ENCODE measurements at regions of chr6 and their contacts with region 1.

Region 1: DNA sequence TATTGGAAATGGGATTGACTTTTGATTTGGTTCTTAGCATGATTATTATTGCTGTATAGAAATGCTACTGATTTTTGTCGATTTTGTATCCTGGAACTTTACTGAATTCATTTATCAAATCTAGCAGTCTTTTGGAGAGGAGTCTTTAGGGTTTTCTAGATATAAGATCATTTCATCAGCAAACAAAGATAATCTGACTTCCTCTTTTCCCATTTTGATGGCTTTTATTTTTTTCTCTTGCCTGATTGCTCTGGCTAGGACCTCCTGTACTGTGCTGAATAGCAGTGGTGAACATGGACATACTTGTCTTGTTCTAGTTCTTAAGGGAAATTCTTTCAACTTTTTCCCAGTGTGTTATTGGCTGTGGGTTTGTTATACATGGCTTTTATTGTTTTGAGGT is 64.6 kb downstream of the ZC2HC1B start:
- DNase-seq: no peak
- H3K4me3 ChIP-seq: no peak overlapping the region
- H3K27ac ChIP-seq: no peak overlapping the region
- H3K4me1 ChIP-seq: no peaks in the 10 kb centered on the region
- CTCF ChIP-seq: no peak

Region 2: GRCh38 chr6:143912671-143913070 is 16.2 kb before region 1 on chr6:
- CTCF ChIA-PET with region 1: no interaction called
- POLR2A ChIA-PET with region 1: no interaction called
- intact Hi-C with region 1: no loop called
- DNase-seq: no peak
- H3K4me3 ChIP-seq: no peak overlapping the region
- H3K27ac ChIP-seq: no peak overlapping the region
- H3K4me1 ChIP-seq: no peaks in the 10 kb centered on the region
- CTCF ChIP-seq: no peak

Region 3: DNA sequence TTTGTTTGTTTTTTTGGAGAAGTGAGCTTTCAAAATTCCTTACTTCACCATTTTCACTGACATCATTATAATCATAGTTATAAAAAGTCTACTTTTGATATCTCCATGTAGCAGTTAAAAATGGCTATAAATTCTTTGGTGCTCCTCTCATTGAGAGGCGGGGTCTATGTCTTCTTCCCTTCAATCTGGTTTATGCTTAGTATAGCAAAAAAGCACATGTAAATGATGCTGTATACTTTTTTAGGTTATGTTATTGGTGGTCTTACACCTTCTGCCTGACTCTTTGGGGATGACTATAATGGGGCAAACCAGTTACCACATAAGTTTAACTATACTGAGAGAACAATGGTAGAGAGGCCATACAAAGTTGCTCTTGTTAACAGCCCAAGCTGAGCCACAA is 1516.8 kb after region 1 on chr6:
- CTCF ChIA-PET with region 1: no interaction called
- POLR2A ChIA-PET with region 1: interaction called, 10 read pairs
- intact Hi-C with region 1: no loop called
- DNase-seq: no peak
- H3K4me3 ChIP-seq: no peak overlapping the region
- H3K27ac ChIP-seq: no peak overlapping the region
- H3K4me1 ChIP-seq: no peaks in the 10 kb centered on the region
- CTCF ChIP-seq: no peak